GM12878 (cell line): ENCODE measurements at regions of chr9 and their contacts with region 1.

Region 1: DNA sequence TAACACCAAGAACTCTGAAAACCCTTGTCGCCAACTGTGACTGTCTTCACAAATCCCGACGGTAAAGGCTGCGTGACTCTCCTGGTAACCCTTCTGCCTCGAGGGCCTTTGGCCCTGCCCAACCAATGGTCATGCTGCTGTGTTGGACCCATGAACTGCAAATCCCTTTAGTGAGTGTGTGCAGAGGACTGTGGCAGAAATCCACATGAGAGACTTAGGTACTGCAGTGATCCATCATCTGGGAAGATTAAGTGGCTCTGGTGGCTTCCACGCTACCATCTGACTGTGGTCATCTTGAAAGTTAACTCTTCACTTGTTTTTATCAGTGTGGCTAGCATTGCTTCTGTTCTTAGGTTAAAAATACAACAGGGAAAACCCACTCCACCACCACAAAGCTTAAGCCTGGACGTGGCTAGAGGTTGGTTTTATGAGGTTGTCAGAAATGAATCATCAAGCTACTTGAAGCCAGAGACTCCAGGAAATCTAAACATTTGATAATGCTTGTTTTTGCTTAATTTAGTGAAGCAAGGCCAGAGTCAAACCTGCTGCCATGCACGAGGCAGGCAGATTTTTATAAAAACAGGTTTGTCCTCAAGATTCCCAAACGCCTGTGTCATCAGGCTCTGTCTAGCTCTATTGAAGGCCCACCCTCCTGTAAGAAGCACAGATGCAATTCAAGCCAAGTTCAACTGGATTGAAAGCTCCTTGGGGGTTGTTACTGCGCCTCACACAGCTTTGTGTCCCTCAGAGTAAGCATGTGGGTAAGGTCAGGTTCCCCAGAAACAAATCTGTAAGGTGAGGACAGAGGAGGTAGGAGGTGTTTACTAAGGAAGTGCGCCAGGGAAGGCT is 52.7 kb upstream of the ERCC6L2 start:
- DNase-seq: peak; percentile 84
- ATAC-seq: peak; percentile 96
- H3K4me3 ChIP-seq: peak overlapping the region; percentile 32; the same call in 1 of the 2 replicates
- H3K27ac ChIP-seq: 0 out of 2 replicates have a peak overlapping the region, but pooled peaks have one; percentile 15
- H3K4me1 ChIP-seq: peaks cover 25% of the 10 kb centered on the region
- H3K27me3 ChIP-seq: peaks cover 0 to 3% of the 10 kb centered on the region in 2 experiments; a peak in 3 of 4 replicates
- CTCF ChIP-seq: no peak
- EP300 ChIP-seq: peak; percentile 81 to 85; a peak in 3 of 4 replicates
- POLR2A ChIP-seq: no peak
- RAD21 ChIP-seq: no peak

Region 2: GRCh38 chr9:95678759-95679158 is 144.0 kb before region 1 on chr9:
- CTCF ChIA-PET with region 1: no interaction called
- POLR2A ChIA-PET with region 1: no interaction called
- RAD21 ChIA-PET with region 1: no interaction called
- SMC1A ChIA-PET with region 1: no interaction called
- in situ Hi-C with region 1: no loop called
- intact Hi-C with region 1: no loop called
- DNase-seq: no peak
- ATAC-seq: no peak
- H3K4me3 ChIP-seq: no peak overlapping the region
- H3K27ac ChIP-seq: no peak overlapping the region
- H3K4me1 ChIP-seq: no peaks in the 10 kb centered on the region
- H3K27me3 ChIP-seq: no peaks in the 10 kb centered on the region; a peak in 1 of 4 replicates
- CTCF ChIP-seq: no peak
- EP300 ChIP-seq: no peak
- POLR2A ChIP-seq: no peak
- RAD21 ChIP-seq: no peak

Region 3: GRCh38 chr9:95852059-95853032 is 29.5 kb after region 1 on chr9:
- CTCF ChIA-PET with region 1: no interaction called
- POLR2A ChIA-PET with region 1: no interaction called
- RAD21 ChIA-PET with region 1: no interaction called
- SMC1A ChIA-PET with region 1: interaction called, 3 read pairs
- in situ Hi-C with region 1: no loop called
- intact Hi-C with region 1: loop called (anchors 1 kb)
- DNase-seq: peak; percentile 84
- ATAC-seq: peak; percentile 94
- H3K4me3 ChIP-seq: peak overlapping the region; percentile 26
- H3K27ac ChIP-seq: peak overlapping the region; percentile 51
- H3K4me1 ChIP-seq: peaks cover 34% of the 10 kb centered on the region
- H3K27me3 ChIP-seq: no peaks in the 10 kb centered on the region
- CTCF ChIP-seq: no peak
- EP300 ChIP-seq: peak; percentile 82 to 94; a peak in 3 of 4 replicates
- POLR2A ChIP-seq: no peak
- RAD21 ChIP-seq: peak; percentile 14; the same call in 1 of the 2 replicates